ENCODE measurements at regions of chr7 and their contacts with region 1.

Region 1: DNA sequence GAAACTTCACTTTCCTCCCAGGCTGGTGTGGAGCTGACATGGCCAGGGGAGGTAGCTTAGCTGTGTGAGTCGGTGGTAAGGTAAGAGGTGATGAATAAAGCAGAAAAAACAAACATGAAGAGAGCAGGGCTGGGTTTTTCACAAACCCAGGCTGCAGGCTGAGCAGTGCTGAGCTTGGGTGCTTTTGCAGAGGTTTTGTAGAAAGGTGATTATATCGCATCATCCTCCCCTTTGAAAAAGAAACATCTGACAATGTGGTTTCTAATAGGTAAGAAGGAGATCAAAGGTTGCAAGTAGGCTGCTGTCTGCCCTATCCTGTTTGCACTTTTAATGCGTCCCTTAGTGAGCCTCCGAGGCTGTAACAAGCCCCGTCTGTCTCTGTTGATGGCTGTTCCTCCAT is 69.6 kb upstream of the GRM8 start:
- DNase-seq: no peak
- H3K4me3 ChIP-seq: no peak overlapping the region
- H3K27ac ChIP-seq: no peak overlapping the region
- H3K4me1 ChIP-seq: no peaks in the 10 kb centered on the region
- H3K27me3 ChIP-seq: no peaks in the 10 kb centered on the region
- CTCF ChIP-seq: no peak
- POLR2A ChIP-seq: no peak

Region 2: GRCh38 chr7:127107601-127108007 is 214.7 kb before region 1 on chr7:
- intact Hi-C with region 1: loop called in 1 of 2 experiments (anchors 5 kb)
- DNase-seq: peak; percentile 33 to 69 (median 58)
- H3K4me3 ChIP-seq: no peak overlapping the region
- H3K27ac ChIP-seq: no peak overlapping the region
- H3K4me1 ChIP-seq: no peaks in the 10 kb centered on the region
- H3K27me3 ChIP-seq: no peaks in the 10 kb centered on the region
- CTCF ChIP-seq: peak; percentile 24 to 50 (median 36)
- POLR2A ChIP-seq: no peak

Measured in adrenal gland (tissue), 19 donors.